Caco-2 (cell line): ENCODE measurements at regions of chr11 and their contacts with region 1.

Region 1: GRCh38 chr11:73271936-73272719 is at the start of gene P2RY6:
- DNase-seq: peak; percentile 88 to 93
- H3K4me3 ChIP-seq: peak within 1 kb of the TSS; percentile 38
- H3K4me3 Mint-ChIP-seq: peak within 1 kb of the TSS; percentile 80
- H3K27ac Mint-ChIP-seq: peak within 1 kb of the TSS; percentile 99
- H3K4me1 ChIP-seq: peaks cover 79% of the 10 kb centered on the region
- H3K4me1 Mint-ChIP-seq: peaks cover 81% of the 10 kb centered on the region
- H3K27me3 ChIP-seq: no peaks in the 10 kb centered on the region
- H3K27me3 Mint-ChIP-seq: no peaks in the 10 kb centered on the region
- CTCF ChIP-seq: no peak
- total RNA-seq, gene P2RY6: 48.4 and 55.7 TPM in 2 replicates

Region 2: GRCh38 chr11:72871119-72871518 is 401.0 kb before region 1 on chr11:
- CTCF ChIA-PET with region 1: no interaction called
- POLR2A ChIA-PET with region 1: no interaction called
- intact Hi-C with region 1: no loop called
- DNase-seq: no peak
- H3K4me3 ChIP-seq: no peak overlapping the region
- H3K4me3 Mint-ChIP-seq: no peak overlapping the region
- H3K27ac Mint-ChIP-seq: no peak overlapping the region
- H3K4me1 ChIP-seq: no peaks in the 10 kb centered on the region
- H3K4me1 Mint-ChIP-seq: no peaks in the 10 kb centered on the region
- H3K27me3 ChIP-seq: no peaks in the 10 kb centered on the region
- H3K27me3 Mint-ChIP-seq: no peaks in the 10 kb centered on the region
- CTCF ChIP-seq: no peak

Region 3: DNA sequence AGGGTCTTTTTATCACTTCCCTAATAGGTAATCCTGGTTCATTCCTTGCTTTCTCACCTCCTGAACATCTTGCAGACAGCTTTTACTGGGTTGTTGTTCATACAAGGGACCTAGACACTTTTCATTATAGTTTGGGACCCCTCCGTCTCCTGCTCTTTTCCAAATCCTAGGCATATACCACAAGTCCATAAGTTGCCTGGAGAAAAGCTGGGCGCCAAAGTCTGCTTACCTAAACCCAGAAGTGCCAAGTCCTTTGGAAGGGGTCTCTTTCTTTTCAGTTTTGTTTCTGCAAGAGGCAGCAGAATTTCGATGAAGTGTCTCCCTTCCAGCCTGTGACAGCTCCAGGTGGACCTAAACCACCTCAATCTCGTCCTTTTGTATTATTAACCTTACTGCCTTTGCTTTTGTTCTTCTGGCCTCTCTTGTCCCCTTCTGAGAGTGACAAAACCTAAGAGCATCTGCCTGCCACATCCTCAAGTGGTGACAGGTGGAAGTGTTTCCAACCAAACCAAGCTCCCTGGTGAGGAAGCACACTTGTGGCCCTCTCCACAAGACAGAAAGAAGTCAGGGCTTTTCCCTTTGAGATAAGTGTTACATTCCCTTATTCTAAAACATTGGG is 19.4 kb before region 1 on chr11:
- CTCF ChIA-PET with region 1: interaction called, 6 read pairs
- POLR2A ChIA-PET with region 1: interaction called, 6 read pairs
- intact Hi-C with region 1: loop called (anchors 1 kb)
- DNase-seq: peak; percentile 71 to 73
- H3K4me3 ChIP-seq: no peak overlapping the region
- H3K4me3 Mint-ChIP-seq: no peak overlapping the region
- H3K27ac Mint-ChIP-seq: no peak overlapping the region
- H3K4me1 ChIP-seq: peaks cover 8% of the 10 kb centered on the region
- H3K4me1 Mint-ChIP-seq: peaks cover 17% of the 10 kb centered on the region
- H3K27me3 ChIP-seq: no peaks in the 10 kb centered on the region
- H3K27me3 Mint-ChIP-seq: no peaks in the 10 kb centered on the region
- CTCF ChIP-seq: peak; percentile 55 to 70

Region 4: GRCh38 chr11:73327812-73328364 is 55.8 kb after region 1 on chr11:
- CTCF ChIA-PET with region 1: no interaction called
- POLR2A ChIA-PET with region 1: no interaction called
- intact Hi-C with region 1: no loop called
- DNase-seq: no peak
- H3K4me3 ChIP-seq: no peak overlapping the region
- H3K4me3 Mint-ChIP-seq: no peak overlapping the region
- H3K27ac Mint-ChIP-seq: peak overlapping the region; percentile 48
- H3K4me1 ChIP-seq: peaks cover 42% of the 10 kb centered on the region
- H3K4me1 Mint-ChIP-seq: peaks cover 60% of the 10 kb centered on the region
- H3K27me3 ChIP-seq: no peaks in the 10 kb centered on the region
- H3K27me3 Mint-ChIP-seq: no peaks in the 10 kb centered on the region
- CTCF ChIP-seq: no peak